ENCODE measurements at regions of chr13 and their contacts with region 1.

Region 1: GRCh38 chr13:99214232-99214631 is 13.6 kb downstream of the UBAC2 start:
- DNase-seq: peak; percentile 83
- H3K4me3 Mint-ChIP-seq: peak overlapping the region; percentile 72
- H3K27ac Mint-ChIP-seq: peak overlapping the region; percentile 78
- H3K4me1 Mint-ChIP-seq: peaks cover 82% of the 10 kb centered on the region
- H3K27me3 Mint-ChIP-seq: no peaks in the 10 kb centered on the region

Region 2: GRCh38 chr13:98576963-98577822 is 637.0 kb before region 1 on chr13 and contains the start of gene STK24:
- CTCF ChIA-PET with region 1: no interaction called
- intact Hi-C with region 1: loop called (anchors 1 kb)
- DNase-seq: peak; percentile 46
- H3K4me3 Mint-ChIP-seq: peak within 1 kb of the TSS; percentile 84
- H3K27ac Mint-ChIP-seq: peak within 1 kb of the TSS; percentile 88
- H3K4me1 Mint-ChIP-seq: peaks cover 35% of the 10 kb centered on the region
- H3K27me3 Mint-ChIP-seq: no peaks in the 10 kb centered on the region
- total RNA-seq, gene STK24: 95.5 to 96.7 TPM

Region 3: GRCh38 chr13:99033814-99034213 is 180.4 kb before region 1 on chr13:
- CTCF ChIA-PET with region 1: no interaction called
- intact Hi-C with region 1: loop called (anchors 5 kb)
- DNase-seq: no peak
- H3K4me3 Mint-ChIP-seq: no peak overlapping the region
- H3K27ac Mint-ChIP-seq: no peak overlapping the region
- H3K4me1 Mint-ChIP-seq: peaks cover 45% of the 10 kb centered on the region
- H3K27me3 Mint-ChIP-seq: no peaks in the 10 kb centered on the region

Region 4: GRCh38 chr13:99062593-99062992 is 151.6 kb before region 1 on chr13:
- CTCF ChIA-PET with region 1: no interaction called
- intact Hi-C with region 1: no loop called
- DNase-seq: no peak
- H3K4me3 Mint-ChIP-seq: no peak overlapping the region
- H3K27ac Mint-ChIP-seq: no peak overlapping the region
- H3K4me1 Mint-ChIP-seq: peaks cover 79% of the 10 kb centered on the region
- H3K27me3 Mint-ChIP-seq: no peaks in the 10 kb centered on the region

Region 5: GRCh38 chr13:99200432-99201167 is 13.6 kb before region 1 on chr13 and contains the start of gene UBAC2:
- CTCF ChIA-PET with region 1: interaction called, 20 read pairs
- intact Hi-C with region 1: loop called (anchors 1 kb)
- DNase-seq: peak; percentile 95
- H3K4me3 Mint-ChIP-seq: peak within 1 kb of the TSS; percentile 91
- H3K27ac Mint-ChIP-seq: peak within 1 kb of the TSS; percentile 90
- H3K4me1 Mint-ChIP-seq: peaks cover 60% of the 10 kb centered on the region
- H3K27me3 Mint-ChIP-seq: no peaks in the 10 kb centered on the region
- total RNA-seq, gene UBAC2: 43.4 to 44.9 TPM

Region 6: GRCh38 chr13:99237981-99238662 is 23.9 kb after region 1 on chr13:
- CTCF ChIA-PET with region 1: interaction called, 7 read pairs
- intact Hi-C with region 1: loop called (anchors 1 kb)
- DNase-seq: peak; percentile 54
- H3K4me3 Mint-ChIP-seq: peak overlapping the region; percentile 73
- H3K27ac Mint-ChIP-seq: peak overlapping the region; percentile 92
- H3K4me1 Mint-ChIP-seq: peaks cover 62% of the 10 kb centered on the region
- H3K27me3 Mint-ChIP-seq: no peaks in the 10 kb centered on the region

Region 7: DNA sequence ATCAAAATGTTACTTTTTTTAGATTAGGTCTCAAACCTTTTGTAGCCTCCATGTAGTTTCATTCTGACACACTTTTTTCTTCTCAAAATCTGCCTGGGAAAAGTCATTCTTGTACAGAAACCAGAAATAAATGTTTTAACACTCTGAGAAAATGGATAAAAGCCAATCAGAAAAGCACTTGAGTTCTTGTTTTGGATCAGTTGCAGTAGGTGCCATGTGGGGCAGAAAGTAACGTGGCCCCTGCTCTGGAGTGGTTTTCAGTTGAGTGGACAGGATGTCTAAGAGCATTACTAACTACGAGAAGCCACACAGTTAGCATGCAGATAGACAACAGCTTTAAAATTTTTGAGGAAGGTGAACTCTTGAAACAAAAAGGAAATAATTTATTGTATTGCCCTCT is 73.9 kb after region 1 on chr13:
- CTCF ChIA-PET with region 1: no interaction called
- intact Hi-C with region 1: loop called (anchors 2 kb)
- DNase-seq: peak; percentile 89
- H3K4me3 Mint-ChIP-seq: peak overlapping the region; percentile 37
- H3K27ac Mint-ChIP-seq: peak overlapping the region; percentile 89
- H3K4me1 Mint-ChIP-seq: peaks cover 80% of the 10 kb centered on the region
- H3K27me3 Mint-ChIP-seq: no peaks in the 10 kb centered on the region

Region 8: DNA sequence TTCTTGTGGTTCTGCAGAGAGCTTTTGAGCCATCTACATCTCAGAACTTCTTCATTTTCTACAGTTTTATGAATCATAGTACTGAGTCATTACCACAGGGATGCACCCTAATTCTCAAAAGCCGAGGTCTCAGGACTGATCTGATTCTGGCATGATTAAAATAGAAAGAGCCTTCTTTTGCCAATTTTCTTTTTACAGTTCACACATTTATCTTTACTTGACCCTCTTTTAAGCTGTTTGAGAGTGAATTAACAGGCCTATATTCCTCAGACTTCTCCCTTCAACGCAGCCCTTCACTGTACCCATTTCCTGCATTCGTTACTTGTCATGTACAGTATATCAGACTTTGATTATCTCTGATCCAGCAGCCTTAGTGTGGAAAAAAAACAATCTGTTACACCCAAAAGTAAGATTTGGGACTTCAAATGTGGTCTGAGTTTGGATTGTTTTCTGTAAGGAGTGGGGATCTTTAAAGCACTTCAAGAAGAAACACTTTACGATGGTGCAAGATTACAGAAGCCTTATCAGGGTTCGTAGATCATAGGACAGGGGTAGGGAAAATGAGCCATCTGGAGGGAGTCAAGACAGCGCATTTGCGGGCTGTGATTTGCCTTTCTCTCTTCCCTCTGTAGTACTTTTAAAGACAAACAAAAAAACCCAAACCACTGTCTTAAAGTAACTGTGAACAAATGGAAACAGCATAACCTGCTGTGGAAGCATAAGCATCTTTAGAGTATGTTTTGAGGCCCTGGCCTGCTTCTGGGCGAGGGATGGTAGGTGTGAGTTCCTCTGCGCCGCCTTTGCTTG is 108.3 kb after region 1 on chr13:
- CTCF ChIA-PET with region 1: interaction called, 4 read pairs
- intact Hi-C with region 1: loop called (anchors 2 kb)
- DNase-seq: peak; percentile 63
- H3K4me3 Mint-ChIP-seq: peak overlapping the region; percentile 56
- H3K27ac Mint-ChIP-seq: peak overlapping the region; percentile 87
- H3K4me1 Mint-ChIP-seq: peaks cover 75% of the 10 kb centered on the region
- H3K27me3 Mint-ChIP-seq: no peaks in the 10 kb centered on the region

Region 9: DNA sequence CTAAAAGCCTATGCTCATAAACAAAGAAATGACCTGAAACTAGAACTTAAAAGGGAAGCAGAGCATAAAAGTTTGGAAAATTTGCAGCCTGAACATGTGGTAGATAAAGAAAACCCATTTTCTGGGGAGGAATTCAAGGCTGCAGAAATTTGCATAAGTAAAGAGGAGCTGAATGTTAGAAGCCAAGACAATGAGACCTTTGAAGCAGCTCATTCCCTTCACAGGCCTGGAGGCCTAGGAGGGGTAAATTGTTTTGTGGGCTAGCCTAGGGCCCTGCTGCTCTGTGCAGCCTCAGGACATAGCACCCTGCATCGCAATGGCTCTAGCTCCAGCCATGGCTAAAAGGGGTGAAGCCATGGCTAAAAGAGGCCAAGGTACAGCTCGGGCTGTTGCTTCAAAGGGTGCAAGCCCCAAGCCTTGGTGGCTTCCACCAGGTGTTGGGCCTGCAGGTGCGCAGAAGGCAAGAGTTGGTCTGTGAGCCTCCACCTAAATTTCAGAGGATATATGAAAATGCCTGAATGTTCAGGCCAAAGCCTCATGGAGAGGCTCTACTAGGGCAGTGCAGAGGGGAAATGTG is 805.6 kb after region 1 on chr13:
- CTCF ChIA-PET with region 1: no interaction called
- intact Hi-C with region 1: no loop called
- DNase-seq: no peak
- H3K4me3 Mint-ChIP-seq: no peak overlapping the region
- H3K27ac Mint-ChIP-seq: no peak overlapping the region
- H3K4me1 Mint-ChIP-seq: no peaks in the 10 kb centered on the region
- H3K27me3 Mint-ChIP-seq: no peaks in the 10 kb centered on the region